ENCODE measurements at regions of chr18 and their contacts with region 1.

Region 1: DNA sequence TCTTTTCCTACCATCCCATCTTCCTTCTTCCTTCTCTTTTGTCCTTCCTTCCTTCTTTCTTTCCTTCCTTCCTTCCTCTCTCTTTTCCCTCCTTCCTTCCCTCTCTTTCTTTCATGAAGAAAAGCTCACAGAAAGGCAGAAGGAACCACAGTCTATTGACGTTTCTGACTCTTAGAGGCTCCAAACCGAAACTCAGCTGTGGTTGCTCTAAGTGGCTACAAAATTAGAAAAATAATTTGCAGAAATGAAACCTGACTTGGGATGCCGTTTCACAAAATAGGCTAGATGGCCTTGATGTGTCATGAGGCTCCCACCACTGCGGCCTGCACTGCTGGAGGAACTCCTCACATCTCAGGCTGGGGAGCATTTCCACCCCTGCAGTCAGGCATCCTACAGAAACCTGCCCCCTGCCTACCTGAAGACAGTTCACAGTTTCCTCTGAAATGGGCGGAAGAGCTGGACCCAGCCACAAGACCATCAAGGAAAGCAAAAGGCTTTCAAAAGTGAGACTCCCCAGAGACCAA is 165.6 kb downstream of the SMAD7 start:
- DNase-seq: peak; percentile 90
- H3K4me3 ChIP-seq: peak overlapping the region; percentile 49
- H3K27ac ChIP-seq: peak overlapping the region; percentile 98
- H3K4me1 ChIP-seq: peaks cover 69% of the 10 kb centered on the region
- CTCF ChIP-seq: peak; percentile 27; the same call in 1 of the 2 replicates

Region 2: DNA sequence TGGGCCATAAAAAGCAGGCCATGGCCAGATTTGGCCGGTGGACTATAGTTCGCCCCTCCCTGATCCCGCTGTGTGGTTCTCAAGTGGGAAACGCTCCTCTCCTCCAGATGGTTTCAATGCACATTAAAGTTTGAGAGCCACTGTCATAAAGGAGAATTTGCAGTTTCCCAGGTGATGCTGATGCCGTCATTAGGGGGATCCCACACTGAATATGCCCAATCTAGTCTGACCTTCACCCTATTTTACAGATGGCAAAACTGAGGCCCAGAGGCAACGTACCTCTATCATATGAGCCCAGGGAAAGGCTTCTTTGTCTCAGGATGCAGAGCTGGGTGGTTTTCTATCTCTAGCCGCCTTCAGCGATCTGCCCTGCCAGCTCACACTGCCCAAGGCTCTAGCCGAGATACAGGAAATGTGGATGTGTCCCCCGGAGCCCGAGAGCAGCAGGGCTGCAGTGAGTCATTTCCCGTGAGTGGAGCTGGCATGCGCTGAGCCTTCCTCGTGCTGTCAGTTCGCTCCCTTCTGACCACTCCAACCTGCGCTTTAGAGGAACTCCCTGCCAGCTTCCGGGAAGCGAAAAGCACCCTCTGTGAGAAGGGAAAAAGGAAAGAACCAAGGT is 49.4 kb after region 1 on chr18:
- CTCF ChIA-PET with region 1: no interaction called
- POLR2A ChIA-PET with region 1: interaction called, 3 read pairs
- intact Hi-C with region 1: loop called (anchors 5 kb)
- DNase-seq: peak; percentile 52
- H3K4me3 ChIP-seq: peak overlapping the region; percentile 58
- H3K27ac ChIP-seq: peak overlapping the region; percentile 82
- H3K4me1 ChIP-seq: peaks cover 63% of the 10 kb centered on the region
- CTCF ChIP-seq: no peak

Region 3: GRCh38 chr18:48868468-48869466 is 83.6 kb after region 1 on chr18:
- CTCF ChIA-PET with region 1: no interaction called
- POLR2A ChIA-PET with region 1: no interaction called
- intact Hi-C with region 1: loop called (anchors 5 kb)
- DNase-seq: peak; percentile 86
- H3K4me3 ChIP-seq: no peak overlapping the region
- H3K27ac ChIP-seq: peak overlapping the region; percentile 75
- H3K4me1 ChIP-seq: peaks cover 21% of the 10 kb centered on the region
- CTCF ChIP-seq: no peak